Pancreas (tissue), 10 donors: ENCODE measurements at regions of chr16 and their contacts with region 1.

Region 1: DNA sequence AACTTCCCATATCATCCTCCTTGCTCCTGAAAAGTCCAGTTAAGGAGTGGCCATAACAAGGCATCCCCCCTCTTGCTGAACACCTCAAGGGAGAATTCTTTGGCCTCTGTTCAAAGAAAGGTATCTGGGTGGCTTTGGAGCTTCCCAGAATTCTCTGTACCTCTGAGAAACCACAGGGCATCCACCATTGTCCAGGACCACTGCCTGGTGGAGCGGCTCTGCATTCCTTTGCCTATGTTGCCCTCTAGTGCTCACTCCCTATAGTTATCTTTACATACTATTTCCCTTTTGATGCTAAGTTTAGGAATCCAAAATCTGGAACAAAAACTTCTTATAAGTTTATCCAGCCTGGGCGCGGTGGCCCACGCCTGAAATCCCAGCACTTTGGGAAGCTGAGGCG is 30.3 kb downstream of the CHD9NB start:
- DNase-seq: peak in 1 of 6 donors; percentile 36
- ATAC-seq: peak; percentile 73 to 90 (median 89)
- H3K4me3 ChIP-seq: no peak overlapping the region
- H3K27ac ChIP-seq: no peak overlapping the region
- H3K4me1 ChIP-seq: no peaks in the 10 kb centered on the region
- H3K27me3 ChIP-seq: no peaks in the 10 kb centered on the region
- CTCF ChIP-seq: peak; percentile 10 to 24 (median 19)

Region 2: DNA sequence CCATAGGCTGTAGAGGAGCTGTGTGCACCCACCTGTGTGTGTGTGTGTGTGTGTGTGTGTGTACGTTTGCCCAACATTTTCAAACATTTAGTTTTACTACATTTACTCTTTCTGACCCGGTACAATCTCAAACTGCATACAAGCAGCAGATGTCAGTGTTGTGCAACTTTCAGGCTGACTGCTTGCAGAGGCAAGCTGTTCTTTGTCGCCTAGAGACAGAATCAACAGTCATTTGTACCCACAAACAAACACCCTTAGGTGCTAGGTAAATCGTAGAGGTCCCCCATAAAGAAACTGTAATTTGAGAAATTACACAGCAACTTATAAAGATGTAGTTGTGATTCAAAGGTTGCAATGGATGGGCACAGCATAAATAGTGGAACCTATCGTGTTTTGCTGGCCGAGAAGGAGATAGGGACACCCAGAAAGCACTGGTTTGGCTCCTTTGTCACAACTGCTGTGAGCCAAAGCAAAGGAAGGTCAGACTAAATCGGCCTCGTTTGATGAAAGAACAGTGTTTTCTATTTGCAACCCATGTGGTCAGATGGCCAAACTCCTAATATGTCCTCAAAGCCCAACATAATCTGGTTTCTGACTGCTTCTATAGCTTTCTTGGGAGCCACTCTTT is 953.8 kb before region 1 on chr16:
- intact Hi-C with region 1: loop called in 1 of 3 experiments (anchors 10 kb)
- DNase-seq: peak in 3 of 6 donors; percentile 24 to 39 (median 35)
- ATAC-seq: peak; percentile 91 to 96 (median 94)
- H3K4me3 ChIP-seq: no peak overlapping the region
- H3K27ac ChIP-seq: no peak overlapping the region
- H3K4me1 ChIP-seq: no peaks in the 10 kb centered on the region
- H3K27me3 ChIP-seq: peaks cover 0 to 8% (median 0%) of the 10 kb centered on the region in 4 donors
- CTCF ChIP-seq: peak in 2 of 4 donors; percentile 20 to 24

Region 3: DNA sequence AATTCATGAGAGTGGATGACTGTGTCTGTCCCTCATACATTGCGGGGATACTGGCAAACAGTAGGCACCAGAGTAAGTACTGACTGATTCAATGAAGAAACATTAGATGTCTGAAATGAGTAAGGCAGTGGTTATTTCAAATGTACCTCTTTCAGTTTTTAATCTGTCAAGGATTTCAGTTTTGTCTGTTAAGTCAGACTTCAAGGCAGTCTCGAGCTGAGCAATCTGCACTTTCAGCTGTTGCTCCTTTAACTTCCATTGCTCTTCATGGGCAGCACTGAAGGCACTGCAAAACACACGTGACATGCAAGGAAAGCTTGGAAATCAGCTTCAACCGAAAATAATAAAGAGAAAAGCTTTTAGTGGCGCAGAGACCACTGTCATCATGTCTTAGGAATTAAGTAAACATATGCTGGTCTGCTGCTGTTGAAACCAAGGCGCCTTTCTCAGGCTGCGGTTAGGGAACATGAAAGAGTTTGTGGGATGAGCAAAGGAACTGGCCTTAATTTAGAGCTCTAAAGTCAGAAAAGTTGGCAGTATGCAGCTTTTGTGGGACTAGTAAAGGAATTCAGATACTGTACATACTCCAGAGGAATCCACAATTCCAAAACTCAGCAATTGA is 642.5 kb after region 1 on chr16:
- intact Hi-C with region 1: no loop called
- DNase-seq: peak in 1 of 6 donors; percentile 20
- ATAC-seq: peak in 3 of 4 donors; percentile 38 to 63 (median 57)
- H3K4me3 ChIP-seq: no peak overlapping the region
- H3K27ac ChIP-seq: no peak overlapping the region
- H3K4me1 ChIP-seq: no peaks in the 10 kb centered on the region
- H3K27me3 ChIP-seq: no peaks in the 10 kb centered on the region
- CTCF ChIP-seq: no peak